ENCODE measurements at regions of chr14 and their contacts with region 1.

Region 1: GRCh38 chr14:34671716-34672115 is 41.8 kb upstream of the SNX6 start:
- H3K4me3 Mint-ChIP-seq: no peak overlapping the region
- H3K27ac Mint-ChIP-seq: peak overlapping the region; percentile 65
- H3K4me1 Mint-ChIP-seq: peaks cover 10% of the 10 kb centered on the region
- H3K27me3 Mint-ChIP-seq: no peaks in the 10 kb centered on the region

Region 2: GRCh38 chr14:34722717-34723545 is 51.2 kb after region 1 on chr14:
- intact Hi-C with region 1: loop called (anchors 2 kb)
- H3K4me3 Mint-ChIP-seq: no peak overlapping the region
- H3K27ac Mint-ChIP-seq: no peak overlapping the region
- H3K4me1 Mint-ChIP-seq: no peaks in the 10 kb centered on the region
- H3K27me3 Mint-ChIP-seq: no peaks in the 10 kb centered on the region

Region 3: GRCh38 chr14:34895277-34895676 is 223.6 kb after region 1 on chr14:
- intact Hi-C with region 1: no loop called
- H3K4me3 Mint-ChIP-seq: no peak overlapping the region
- H3K27ac Mint-ChIP-seq: no peak overlapping the region
- H3K4me1 Mint-ChIP-seq: no peaks in the 10 kb centered on the region
- H3K27me3 Mint-ChIP-seq: no peaks in the 10 kb centered on the region

Region 4: DNA sequence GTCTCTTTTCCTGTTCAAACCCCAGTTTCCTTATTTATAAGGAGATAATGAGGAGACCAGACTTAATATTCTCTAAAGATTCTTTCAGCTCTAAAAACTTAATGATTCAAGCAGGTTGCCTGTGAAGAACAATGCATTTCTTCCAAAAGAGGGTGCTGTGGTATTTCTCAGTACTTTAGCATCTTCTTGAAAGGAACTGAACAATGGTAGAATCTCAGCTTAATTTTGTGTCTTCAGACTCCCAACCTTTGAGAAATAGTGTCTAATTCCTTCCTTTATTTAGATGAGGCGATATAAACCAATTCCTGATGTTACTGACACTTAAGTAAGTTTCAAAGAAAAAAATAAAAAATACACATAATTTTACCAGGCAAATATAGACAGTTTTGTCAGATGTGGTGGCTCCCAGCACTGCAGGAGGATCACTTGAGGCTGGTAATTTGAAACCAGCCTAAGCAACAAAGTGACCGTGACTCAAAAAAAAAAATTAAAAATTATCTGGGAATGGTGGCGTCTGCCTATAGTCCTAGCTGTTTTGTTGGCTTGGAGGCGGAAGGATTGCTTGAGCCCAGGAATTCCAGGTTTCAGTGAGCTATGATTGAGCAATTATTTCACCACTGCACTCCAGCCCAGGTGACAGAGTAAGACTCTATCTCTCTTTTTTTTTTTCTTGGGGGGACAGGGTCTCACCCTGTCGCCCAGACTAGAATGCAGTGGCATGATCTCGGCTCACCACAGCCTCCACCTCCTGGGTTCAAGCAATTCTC is 543.6 kb after region 1 on chr14:
- intact Hi-C with region 1: no loop called
- H3K4me3 Mint-ChIP-seq: no peak overlapping the region
- H3K27ac Mint-ChIP-seq: no peak overlapping the region
- H3K4me1 Mint-ChIP-seq: no peaks in the 10 kb centered on the region
- H3K27me3 Mint-ChIP-seq: no peaks in the 10 kb centered on the region